ENCODE measurements at regions of chr19 and their contacts with region 1.

Region 1: GRCh38 chr19:796692-797527 is at the start of gene PTBP1:
- DNase-seq: peak; percentile 97 to 100 (median 100)
- ATAC-seq: peak; percentile 84 to 87
- H3K4me3 Mint-ChIP-seq: peak within 1 kb of the TSS; percentile 88 to 97 (median 95)
- H3K27ac Mint-ChIP-seq: peak within 1 kb of the TSS; percentile 88 to 96 (median 94)
- H3K4me1 Mint-ChIP-seq: peaks cover 17 to 37% (median 33%) of the 10 kb centered on the region in 4 donors
- H3K27me3 Mint-ChIP-seq: no peaks in the 10 kb centered on the region
- polyA plus RNA-seq, gene PTBP1: 110 to 190 (median 110) TPM

Region 2: DNA sequence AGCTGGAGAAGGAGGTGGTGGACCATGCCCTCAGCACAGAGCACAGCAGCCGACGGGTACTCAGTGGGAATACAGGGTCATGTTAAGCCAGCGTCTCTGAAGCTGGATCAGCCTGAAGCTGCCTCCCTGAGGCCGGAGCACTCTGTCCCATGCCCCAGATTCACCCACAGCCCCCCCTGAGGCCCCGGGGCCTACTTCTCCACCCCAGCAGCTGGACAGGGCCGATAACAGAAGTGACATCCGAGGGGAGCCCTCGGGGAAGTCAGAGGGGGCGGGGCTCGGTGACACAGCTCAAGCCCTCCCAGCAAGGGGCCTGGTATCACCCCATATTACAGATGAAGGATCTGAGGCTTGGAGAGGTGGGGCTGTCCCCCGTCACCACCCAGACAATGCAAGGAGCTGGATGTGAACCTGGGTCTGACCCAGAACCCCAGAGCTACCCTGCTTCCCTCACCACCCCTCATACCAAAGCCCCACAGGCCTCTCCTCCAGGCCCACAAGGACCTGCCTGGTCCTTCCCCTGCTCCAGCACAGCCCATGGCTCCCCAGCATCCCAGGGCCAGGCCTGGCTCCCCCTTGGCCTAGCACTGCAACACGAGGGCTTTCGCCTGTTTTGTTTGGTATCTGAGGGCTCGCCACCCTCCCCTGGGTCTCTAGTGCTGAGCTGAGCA is 110.4 kb after region 1 on chr19:
- POLR2A ChIA-PET with region 1: interaction called, 10 read pairs
- DNase-seq: peak in 3 of 10 donors; percentile 45 to 49 (median 47)
- ATAC-seq: peak in 1 of 2 donors; percentile 4
- H3K4me3 Mint-ChIP-seq: peak overlapping the region; percentile 48 to 91 (median 86)
- H3K27ac Mint-ChIP-seq: peak overlapping the region; percentile 99 to 100 (median 100)
- H3K4me1 Mint-ChIP-seq: peaks cover 14 to 72% (median 62%) of the 10 kb centered on the region in 4 donors
- H3K27me3 Mint-ChIP-seq: no peaks in the 10 kb centered on the region

Measured in naive thymus-derived CD8-positive, alpha-beta T cell (primary cell).